ENCODE measurements at regions of chr2 and their contacts with region 1.

Region 1: GRCh38 chr2:20097879-20098714 is 46.7 kb upstream of the LAPTM4A start:
- DNase-seq: peak; percentile 89
- H3K4me3 ChIP-seq: no peak overlapping the region
- H3K27ac ChIP-seq: no peak overlapping the region
- H3K4me1 ChIP-seq: peaks cover 15% of the 10 kb centered on the region
- H3K27me3 ChIP-seq: no peaks in the 10 kb centered on the region

Region 2: DNA sequence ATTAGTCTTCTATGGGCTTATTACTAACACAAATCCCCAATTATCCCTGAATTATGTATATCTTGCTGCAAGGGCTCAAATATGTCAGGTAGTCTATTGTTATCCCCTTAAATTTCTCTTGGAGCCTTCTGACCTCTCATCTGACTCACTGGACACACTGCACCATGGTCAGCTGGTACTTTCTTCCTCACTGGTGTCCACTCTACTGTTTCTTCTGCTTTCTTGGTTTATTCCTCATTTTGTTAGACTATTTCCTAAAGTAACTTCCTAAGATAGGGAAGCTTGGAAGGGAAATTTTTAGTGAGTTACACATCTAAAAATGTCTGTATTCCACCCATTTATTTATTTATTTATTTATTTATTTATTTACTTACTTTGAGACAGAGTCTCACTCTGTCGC is 134.7 kb before region 1 on chr2:
- in situ Hi-C with region 1: loop called (anchors 10 kb)
- DNase-seq: no peak
- H3K4me3 ChIP-seq: no peak overlapping the region
- H3K27ac ChIP-seq: no peak overlapping the region
- H3K4me1 ChIP-seq: no peaks in the 10 kb centered on the region
- H3K27me3 ChIP-seq: no peaks in the 10 kb centered on the region

Region 3: DNA sequence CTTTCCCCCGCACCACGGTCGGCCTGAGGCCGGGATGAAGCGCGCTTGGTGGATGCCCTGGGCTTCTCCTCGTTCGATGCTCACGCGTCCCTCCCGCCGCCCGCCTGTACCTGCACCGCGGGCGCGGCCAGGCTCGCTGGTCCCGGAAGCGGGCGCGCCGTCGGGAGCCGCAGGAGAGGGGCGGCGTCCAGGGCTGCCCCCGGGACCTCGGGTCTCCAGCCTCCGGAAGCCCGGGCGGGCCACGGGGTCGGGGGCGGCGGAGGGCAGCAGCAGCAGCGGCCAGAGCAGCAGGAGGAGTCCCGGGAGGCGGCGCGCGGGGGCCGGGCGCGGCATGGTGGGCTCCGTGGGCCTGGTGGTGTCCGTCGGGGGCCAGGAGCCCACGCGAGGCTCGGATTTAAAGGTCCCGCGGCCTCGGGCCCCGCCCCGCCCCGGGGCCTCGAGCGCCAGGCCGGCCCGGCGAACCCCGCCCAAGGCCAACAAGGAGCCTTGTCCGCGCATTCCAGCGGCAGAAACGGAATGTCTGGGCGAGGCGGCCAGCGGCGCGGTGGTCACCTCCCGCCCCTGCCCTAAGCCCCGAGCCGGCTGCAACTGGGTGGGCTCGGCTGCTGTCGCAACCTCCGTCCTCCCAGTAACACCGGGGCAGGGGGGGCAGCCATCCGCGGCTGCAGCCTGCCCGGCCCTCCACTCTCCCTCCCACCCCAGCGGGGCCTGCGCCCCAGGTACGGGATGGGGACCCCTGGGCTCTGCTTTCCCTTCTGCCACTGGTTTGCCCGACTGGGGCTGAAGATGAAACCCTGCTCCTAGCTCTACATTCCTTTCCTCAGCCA is 85.6 kb before region 1 on chr2 and contains the start of gene MATN3:
- in situ Hi-C with region 1: loop called (anchors 5 kb)
- DNase-seq: peak; percentile 65
- H3K4me3 ChIP-seq: peak within 1 kb of the TSS; percentile 70
- H3K27ac ChIP-seq: no peak within 1 kb of the TSS
- H3K4me1 ChIP-seq: no peaks in the 10 kb centered on the region
- H3K27me3 ChIP-seq: peaks cover 5% of the 10 kb centered on the region; the same call in 1 of the 2 replicates
- total RNA-seq, gene MATN3: 0.25 and 0.54 TPM in 2 replicates

Measured in GM23248 (cell line).